ENCODE measurements at regions of chr17 and their contacts with region 1.

Region 1: GRCh38 chr17:50501054-50501453 is 7.2 kb upstream of the MYCBPAP start:
- DNase-seq: peak in 1 of 9 donors; percentile 18
- ATAC-seq: no peak
- H3K4me3 ChIP-seq: no peak overlapping the region
- H3K4me3 Mint-ChIP-seq: no peak overlapping the region
- H3K27ac ChIP-seq: no peak overlapping the region
- H3K27ac Mint-ChIP-seq: no peak overlapping the region
- H3K4me1 ChIP-seq: peaks cover 0 to 8% of the 10 kb centered on the region in 2 donors
- H3K4me1 Mint-ChIP-seq: peaks cover 0 to 23% (median 13%) of the 10 kb centered on the region in 7 donors
- H3K27me3 ChIP-seq: no peaks in the 10 kb centered on the region
- H3K27me3 Mint-ChIP-seq: peaks cover 0 to 3% (median 0%) of the 10 kb centered on the region in 5 donors

Region 2: DNA sequence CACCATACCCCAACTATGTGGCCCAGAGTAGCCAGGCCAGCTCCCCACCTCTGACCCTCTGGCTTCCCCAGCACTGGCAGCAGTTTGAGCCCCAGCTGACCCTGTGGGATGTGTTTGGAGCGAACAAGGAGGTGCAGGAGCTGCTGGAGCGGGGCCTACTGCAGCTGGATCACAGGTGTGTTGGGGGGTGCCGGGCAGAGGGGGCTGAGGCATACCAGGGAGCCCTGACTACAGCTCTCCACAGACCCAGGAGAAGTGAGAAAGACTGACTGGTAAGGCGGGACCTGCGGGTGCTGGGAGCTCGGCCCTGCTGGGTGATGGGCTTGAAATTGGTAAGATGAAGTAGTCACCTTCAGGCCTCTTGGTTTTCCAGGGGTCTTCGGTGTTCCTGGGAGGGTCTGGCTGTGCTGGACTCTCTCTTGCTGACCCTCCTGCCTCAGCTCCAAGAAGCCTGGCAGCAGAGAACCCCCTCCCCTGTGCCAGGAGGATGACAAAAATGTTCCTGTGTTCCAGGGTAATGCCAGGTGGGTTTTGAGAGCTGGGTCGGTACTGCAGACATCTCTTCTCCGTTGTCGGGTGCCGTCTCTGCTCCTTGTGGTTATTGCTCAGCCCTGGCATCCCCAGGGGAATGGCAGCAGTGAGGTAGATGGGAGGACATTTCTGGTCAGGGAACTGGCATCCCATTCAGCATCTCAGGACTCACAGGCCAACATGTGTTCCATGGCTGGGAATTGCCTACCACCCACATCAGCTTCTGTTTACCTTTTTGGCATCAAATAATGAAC is 16.5 kb before region 1 on chr17:
- CTCF ChIA-PET with region 1: interaction called, 13 read pairs
- POLR2A ChIA-PET with region 1: interaction called, 5 read pairs
- intact Hi-C with region 1: loop called in 1 of 2 experiments (anchors 1 kb)
- DNase-seq: no peak
- ATAC-seq: no peak
- H3K4me3 ChIP-seq: no peak overlapping the region
- H3K4me3 Mint-ChIP-seq: no peak overlapping the region
- H3K27ac ChIP-seq: no peak overlapping the region
- H3K27ac Mint-ChIP-seq: peak overlapping the region in 2 of 9 donors; percentile 28 to 38
- H3K4me1 ChIP-seq: peaks cover 3 to 4% of the 10 kb centered on the region in 2 donors
- H3K4me1 Mint-ChIP-seq: peaks cover 10 to 16% (median 13%) of the 10 kb centered on the region in 7 donors
- H3K27me3 ChIP-seq: no peaks in the 10 kb centered on the region
- H3K27me3 Mint-ChIP-seq: no peaks in the 10 kb centered on the region